Sigmoid colon (tissue), 7 donors: ENCODE measurements at regions of chr12 and their contacts with region 1.

Region 1: GRCh38 chr12:119115296-119115905 is 63.3 kb upstream of the HSPB8 start:
- DNase-seq: no peak
- H3K4me3 ChIP-seq: no peak overlapping the region
- H3K27ac ChIP-seq: no peak overlapping the region
- H3K4me1 ChIP-seq: peaks cover 0 to 9% (median 2%) of the 10 kb centered on the region in 4 donors
- H3K27me3 ChIP-seq: no peaks in the 10 kb centered on the region
- CTCF ChIP-seq: peak; percentile 69 to 95 (median 84)
- EP300 ChIP-seq: no peak
- POLR2A ChIP-seq: no peak

Region 2: DNA sequence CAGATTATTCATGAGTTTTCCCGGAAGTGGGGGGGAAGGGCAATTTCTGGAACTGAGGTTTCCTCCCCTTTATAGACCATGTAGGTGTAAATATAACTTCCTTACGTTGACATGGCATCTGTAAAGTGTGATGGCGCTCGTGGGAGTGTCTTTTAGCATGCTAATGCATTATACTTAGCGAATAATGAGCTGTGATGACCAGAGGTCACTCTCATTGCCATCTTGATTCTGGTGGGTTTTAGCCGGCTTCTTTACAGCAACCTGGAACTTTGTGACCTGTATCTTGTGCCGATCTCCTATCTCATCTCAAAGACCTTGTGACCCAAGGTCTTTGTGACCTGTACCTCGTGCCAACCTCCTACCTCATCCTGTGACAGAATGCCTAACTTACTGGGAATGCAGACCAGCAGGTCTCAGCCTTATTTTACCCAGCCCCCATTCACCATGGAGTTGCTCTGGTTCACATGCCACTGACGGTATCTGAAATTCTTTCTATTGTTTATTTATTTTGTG is 55.8 kb after region 1 on chr12:
- intact Hi-C with region 1: loop called (anchors 5 kb)
- DNase-seq: no peak
- H3K4me3 ChIP-seq: no peak overlapping the region
- H3K27ac ChIP-seq: no peak overlapping the region
- H3K4me1 ChIP-seq: peaks cover 0 to 5% (median 1%) of the 10 kb centered on the region in 4 donors
- H3K27me3 ChIP-seq: no peaks in the 10 kb centered on the region
- CTCF ChIP-seq: no peak
- EP300 ChIP-seq: no peak
- POLR2A ChIP-seq: no peak

Region 3: DNA sequence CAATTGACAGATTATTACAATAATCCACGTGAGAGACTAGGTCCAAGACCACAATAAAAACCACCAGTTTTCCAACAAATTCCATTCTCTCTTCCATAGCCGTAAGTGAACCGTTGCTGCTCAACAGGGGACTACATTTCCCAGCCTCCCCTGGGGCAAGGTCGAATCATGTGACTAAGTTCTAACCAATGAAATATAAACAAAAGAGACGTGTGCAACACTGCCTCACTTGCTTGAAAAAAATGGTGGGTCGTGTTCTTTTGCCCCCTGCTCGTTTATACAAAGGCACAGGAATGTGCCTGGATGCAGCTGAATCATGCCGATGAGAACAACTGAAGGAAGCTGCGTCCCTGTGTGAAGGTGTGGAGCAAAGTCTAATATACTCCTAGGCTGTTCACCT is 114.4 kb after region 1 on chr12:
- intact Hi-C with region 1: loop called (anchors 10 kb)
- DNase-seq: no peak
- H3K4me3 ChIP-seq: peak overlapping the region in 2 of 4 donors; percentile 14 to 26
- H3K27ac ChIP-seq: no peak overlapping the region
- H3K4me1 ChIP-seq: no peaks in the 10 kb centered on the region
- H3K27me3 ChIP-seq: no peaks in the 10 kb centered on the region
- CTCF ChIP-seq: no peak
- EP300 ChIP-seq: no peak
- POLR2A ChIP-seq: no peak

Region 4: DNA sequence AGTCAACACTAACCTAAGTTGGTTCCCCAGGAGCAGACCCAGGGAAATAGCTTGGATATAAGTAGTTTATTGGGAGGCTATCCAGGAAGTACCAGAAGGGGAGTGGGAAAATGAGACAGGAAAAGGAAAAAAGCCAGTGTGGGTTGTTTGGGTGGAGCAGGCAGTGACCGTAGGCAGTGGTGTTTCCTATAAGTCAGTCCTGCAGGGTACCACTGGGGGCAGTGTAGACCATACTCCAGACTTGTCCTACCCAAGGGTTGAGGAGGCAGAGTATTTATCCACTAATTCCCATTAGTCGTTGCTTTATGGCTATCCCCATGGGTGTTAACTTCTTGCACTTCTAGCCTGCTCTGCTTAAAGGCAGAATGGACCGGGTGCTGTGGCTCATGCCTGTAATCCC is 212.7 kb after region 1 on chr12:
- intact Hi-C with region 1: loop called (anchors 10 kb)
- DNase-seq: peak; percentile 69
- H3K4me3 ChIP-seq: no peak overlapping the region
- H3K27ac ChIP-seq: peak overlapping the region; percentile 80 to 82 (median 82)
- H3K4me1 ChIP-seq: peaks cover 0 to 50% (median 45%) of the 10 kb centered on the region in 4 donors
- H3K27me3 ChIP-seq: no peaks in the 10 kb centered on the region
- CTCF ChIP-seq: peak in 3 of 4 experiments; percentile 21 to 40 (median 25)
- EP300 ChIP-seq: no peak
- POLR2A ChIP-seq: no peak

Region 5: GRCh38 chr12:119544765-119545625 is 429.6 kb after region 1 on chr12:
- intact Hi-C with region 1: loop called (anchors 1 kb)
- DNase-seq: peak; percentile 72
- H3K4me3 ChIP-seq: no peak overlapping the region
- H3K27ac ChIP-seq: no peak overlapping the region
- H3K4me1 ChIP-seq: no peaks in the 10 kb centered on the region
- H3K27me3 ChIP-seq: peaks cover 0 to 9% (median 0%) of the 10 kb centered on the region in 3 donors
- CTCF ChIP-seq: peak; percentile 57 to 86 (median 78)
- EP300 ChIP-seq: no peak
- POLR2A ChIP-seq: no peak